HEK293 (cell line): ENCODE measurements at regions of chr12 and their contacts with region 1.

Region 1: GRCh38 chr12:121499929-121500793 is 80.7 kb downstream of the KDM2B start:
- H3K4me3 ChIP-seq: no peak overlapping the region
- H3K27ac ChIP-seq: no peak overlapping the region
- H3K4me1 ChIP-seq: no peaks in the 10 kb centered on the region
- CTCF ChIP-seq: no peak

Region 2: GRCh38 chr12:121095544-121096198 is 404.5 kb before region 1 on chr12:
- CTCF ChIA-PET with region 1: no interaction called
- POLR2A ChIA-PET with region 1: no interaction called
- H3K4me3 ChIP-seq: peak overlapping the region; percentile 33
- H3K27ac ChIP-seq: no peak overlapping the region
- H3K4me1 ChIP-seq: no peaks in the 10 kb centered on the region
- CTCF ChIP-seq: no peak; the same call in none of the 2 replicates

Region 3: DNA sequence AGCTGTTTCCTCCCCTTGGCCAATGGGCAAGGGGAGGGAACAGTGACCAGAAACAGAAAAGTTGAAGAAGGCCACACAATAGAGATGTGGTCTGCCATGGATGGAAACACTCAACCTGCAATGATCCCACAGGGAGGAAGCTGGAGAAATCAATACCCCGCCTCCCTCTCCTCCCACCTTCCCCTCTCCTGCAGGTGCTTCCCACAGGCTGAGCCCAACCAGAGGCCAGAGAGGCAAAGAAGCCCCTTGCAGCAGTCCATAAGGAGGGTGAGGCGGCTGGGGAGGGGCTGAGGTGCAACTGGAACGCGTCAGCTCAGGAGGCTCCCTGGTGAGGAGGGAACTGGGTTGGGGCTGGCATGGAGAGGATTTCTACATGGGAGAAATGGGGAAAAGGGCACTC is 16.2 kb before region 1 on chr12:
- CTCF ChIA-PET with region 1: interaction called, 16 read pairs
- POLR2A ChIA-PET with region 1: no interaction called
- H3K4me3 ChIP-seq: no peak overlapping the region
- H3K27ac ChIP-seq: no peak overlapping the region
- H3K4me1 ChIP-seq: no peaks in the 10 kb centered on the region
- CTCF ChIP-seq: no peak

Region 4: GRCh38 chr12:121678716-121679580 is 178.8 kb after region 1 on chr12:
- CTCF ChIA-PET with region 1: interaction called, 21 read pairs
- POLR2A ChIA-PET with region 1: no interaction called
- H3K4me3 ChIP-seq: no peak overlapping the region
- H3K27ac ChIP-seq: no peak overlapping the region
- H3K4me1 ChIP-seq: no peaks in the 10 kb centered on the region
- CTCF ChIP-seq: no peak